Posterior vena cava (tissue), 2 donors: ENCODE measurements at regions of chr6 and their contacts with region 1.

Region 1: DNA sequence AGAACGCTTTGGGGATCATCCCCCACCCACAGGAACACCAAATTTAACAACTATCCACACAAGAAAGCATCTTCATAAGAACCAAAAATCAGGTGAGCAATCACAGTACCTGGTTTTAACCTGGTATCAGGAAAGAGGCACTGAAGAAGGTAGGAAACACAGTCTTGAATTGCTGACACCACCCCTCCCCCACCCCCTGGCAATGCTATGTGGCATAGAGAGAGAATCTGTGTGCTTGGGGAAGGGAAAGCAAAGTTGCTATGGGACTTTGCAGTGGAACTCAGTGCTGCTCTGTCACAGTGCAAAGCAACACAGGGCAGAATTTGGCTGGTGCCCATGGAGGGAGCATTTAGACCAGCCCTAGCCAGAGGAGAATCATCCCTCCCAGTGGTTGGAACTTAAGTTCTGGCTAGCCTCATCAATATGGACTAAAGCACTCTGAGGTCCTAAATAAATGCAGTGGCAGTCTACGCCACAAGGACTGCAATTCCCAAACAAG is 565.5 kb downstream of the EPM2A start:
- DNase-seq: no peak

Region 2: GRCh38 chr6:145247679-145248419 is 78.1 kb after region 1 on chr6:
- intact Hi-C with region 1: no loop called
- DNase-seq: no peak

Region 3: DNA sequence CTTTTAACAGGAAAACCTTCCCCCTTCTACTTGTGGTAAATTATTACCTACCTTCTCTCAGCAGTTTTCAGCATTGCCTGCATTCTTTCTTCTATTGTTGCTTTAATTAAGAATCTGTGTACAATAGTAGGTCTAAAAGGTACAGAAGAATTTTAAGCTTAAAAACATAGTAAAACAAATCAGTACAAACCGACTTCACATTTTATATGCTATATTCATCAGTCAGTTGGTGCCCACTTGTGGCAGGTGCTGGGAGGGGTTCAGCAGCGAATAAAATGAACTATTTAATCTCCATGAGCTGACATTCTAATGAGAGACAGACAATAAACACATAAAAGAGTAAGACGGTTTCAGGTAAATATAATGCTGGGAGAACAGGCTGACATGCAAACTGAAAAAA is 718.2 kb after region 1 on chr6:
- intact Hi-C with region 1: loop called in 1 of 2 experiments (anchors 10 kb)
- DNase-seq: no peak